Transverse colon (tissue), 4 donors: ENCODE measurements at regions of chr10 and their contacts with region 1.

Region 1: DNA sequence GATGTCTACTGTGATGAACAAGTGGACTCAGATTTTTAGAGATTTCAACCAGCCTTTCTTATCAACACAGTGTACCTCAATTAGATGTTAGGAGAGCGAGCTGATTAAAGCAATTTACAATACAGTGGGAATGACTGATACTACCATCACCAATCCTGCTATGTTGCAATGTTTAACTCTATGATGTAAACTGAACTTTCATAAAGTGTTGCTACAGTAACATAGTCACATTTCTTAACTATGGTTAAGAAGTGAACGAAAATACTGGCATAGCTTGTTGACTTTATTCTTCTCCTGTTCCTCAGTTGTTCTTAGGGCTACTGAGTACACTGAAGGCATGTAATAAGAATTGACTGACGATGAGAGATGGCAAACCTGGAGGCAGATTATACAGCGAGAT is 139.8 kb downstream of the MYOF start:
- DNase-seq: no peak
- H3K4me3 ChIP-seq: no peak overlapping the region
- H3K27ac ChIP-seq: no peak overlapping the region
- H3K4me1 ChIP-seq: no peaks in the 10 kb centered on the region
- H3K27me3 ChIP-seq: no peaks in the 10 kb centered on the region
- CTCF ChIP-seq: no peak
- EP300 ChIP-seq: no peak
- POLR2A ChIP-seq: no peak

Region 2: DNA sequence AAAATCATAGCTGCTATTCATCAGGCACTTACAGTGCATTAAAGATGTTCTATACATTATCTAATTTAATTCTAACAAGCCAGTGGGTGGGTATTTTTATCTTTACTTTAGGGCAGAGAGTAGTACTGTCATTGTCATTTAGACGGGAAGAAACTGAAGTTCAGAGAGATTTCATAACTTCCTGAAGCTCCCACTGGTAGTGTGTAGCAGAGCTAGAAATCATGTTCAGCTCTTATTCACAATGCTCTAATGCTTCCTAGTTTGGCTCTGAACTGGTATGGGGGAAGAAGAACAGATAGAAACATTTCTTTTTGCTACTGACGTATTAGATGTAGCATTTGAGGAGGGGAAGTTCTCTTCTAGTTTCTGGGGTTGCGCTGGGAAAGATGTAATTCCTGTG is 152.0 kb before region 1 on chr10:
- in situ Hi-C with region 1: no loop called
- intact Hi-C with region 1: no loop called
- DNase-seq: no peak
- H3K4me3 ChIP-seq: no peak overlapping the region
- H3K27ac ChIP-seq: no peak overlapping the region
- H3K4me1 ChIP-seq: peaks cover 0 to 8% (median 0%) of the 10 kb centered on the region in 4 donors
- H3K27me3 ChIP-seq: no peaks in the 10 kb centered on the region
- CTCF ChIP-seq: no peak
- EP300 ChIP-seq: no peak
- POLR2A ChIP-seq: no peak

Region 3: DNA sequence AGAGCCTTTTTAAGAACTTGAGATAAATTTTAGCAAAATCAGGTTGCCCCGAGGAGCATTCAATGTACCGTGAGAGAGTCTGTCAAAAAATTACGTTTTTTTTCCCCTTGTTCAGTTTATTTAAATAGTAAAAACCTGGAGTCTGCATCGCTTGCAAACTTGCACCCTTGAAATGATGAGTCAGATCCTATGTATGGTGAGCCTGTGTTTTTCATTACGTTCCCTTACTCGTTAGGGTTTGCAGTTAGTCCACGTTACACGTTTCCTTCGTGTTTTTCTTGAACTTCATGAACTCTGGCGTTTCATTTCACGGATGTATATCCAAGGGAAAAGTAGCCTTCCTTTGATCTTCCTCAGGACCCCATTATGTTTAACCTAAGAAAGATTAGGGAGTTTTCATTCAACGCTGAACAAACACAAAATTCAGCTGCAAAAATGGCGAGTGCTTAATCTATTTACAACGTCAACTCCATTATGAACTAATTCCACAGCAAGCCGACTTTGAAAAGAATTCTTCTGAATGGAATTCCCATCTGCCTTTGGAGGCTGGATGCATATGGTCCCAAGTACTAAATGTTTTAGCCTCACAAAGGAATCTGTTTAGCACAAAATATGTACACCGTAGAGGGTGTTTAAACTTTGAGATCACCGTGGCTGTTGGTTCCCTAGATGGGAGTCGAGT is 42.6 kb before region 1 on chr10:
- in situ Hi-C with region 1: no loop called
- intact Hi-C with region 1: no loop called
- DNase-seq: no peak
- H3K4me3 ChIP-seq: no peak overlapping the region
- H3K27ac ChIP-seq: no peak overlapping the region
- H3K4me1 ChIP-seq: no peaks in the 10 kb centered on the region
- H3K27me3 ChIP-seq: no peaks in the 10 kb centered on the region
- CTCF ChIP-seq: no peak
- EP300 ChIP-seq: no peak
- POLR2A ChIP-seq: no peak

Region 4: GRCh38 chr10:93977442-93977841 is 635.1 kb after region 1 on chr10:
- in situ Hi-C with region 1: no loop called
- intact Hi-C with region 1: no loop called
- DNase-seq: no peak
- H3K4me3 ChIP-seq: no peak overlapping the region
- H3K27ac ChIP-seq: no peak overlapping the region
- H3K4me1 ChIP-seq: no peaks in the 10 kb centered on the region
- H3K27me3 ChIP-seq: no peaks in the 10 kb centered on the region
- CTCF ChIP-seq: no peak
- EP300 ChIP-seq: no peak
- POLR2A ChIP-seq: no peak

Region 5: DNA sequence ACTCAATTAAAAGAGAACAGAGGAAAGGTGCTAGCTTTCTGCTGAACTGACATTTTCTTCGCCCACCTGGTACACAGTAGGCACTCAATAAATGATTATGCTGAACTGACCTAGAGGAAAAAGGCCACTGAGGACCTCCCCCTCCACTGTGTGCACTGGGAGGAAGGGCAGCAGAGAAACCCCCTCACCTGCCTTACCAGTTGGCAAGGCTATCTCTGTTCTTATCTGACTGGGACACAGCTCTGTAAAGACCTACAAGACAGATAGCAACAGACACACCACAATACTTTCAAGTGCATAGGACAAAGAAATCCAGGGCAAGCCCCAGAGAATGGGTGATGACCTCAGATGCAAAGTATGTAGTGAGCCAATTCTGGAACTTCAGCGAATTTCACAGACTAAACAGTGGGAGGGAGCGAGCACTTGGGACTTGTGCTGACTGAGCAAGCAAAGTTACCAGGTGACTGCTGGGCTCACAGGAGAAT is 1918.1 kb after region 1 on chr10:
- in situ Hi-C with region 1: no loop called
- intact Hi-C with region 1: loop called (anchors 5 kb)
- DNase-seq: no peak
- H3K4me3 ChIP-seq: no peak overlapping the region
- H3K27ac ChIP-seq: peak overlapping the region; percentile 37 to 73 (median 66)
- H3K4me1 ChIP-seq: peaks cover 0 to 29% (median 13%) of the 10 kb centered on the region in 4 donors
- H3K27me3 ChIP-seq: no peaks in the 10 kb centered on the region
- CTCF ChIP-seq: no peak
- EP300 ChIP-seq: no peak
- POLR2A ChIP-seq: no peak